Mammary epithelial cell (primary cell): ENCODE measurements at regions of chr1 and their contacts with region 1.

Region 1: GRCh38 chr1:203216274-203217138 is 13.0 kb downstream of the CHIT1 start:
- DNase-seq: peak; percentile 24
- H3K4me3 ChIP-seq: no peak overlapping the region
- H3K27ac ChIP-seq: no peak overlapping the region
- H3K4me1 ChIP-seq: no peaks in the 10 kb centered on the region
- H3K27me3 ChIP-seq: no peaks in the 10 kb centered on the region
- CTCF ChIP-seq: peak; percentile 64 to 66

Region 2: GRCh38 chr1:203026031-203026989 is 190.2 kb before region 1 on chr1 and contains the start of gene PPFIA4:
- CTCF ChIA-PET with region 1: interaction called, 3 read pairs
- dilution Hi-C with region 1: loop called (anchors 10 kb)
- in situ Hi-C with region 1: loop called (anchors 10 to 25 kb)
- intact Hi-C with region 1: no loop called
- DNase-seq: peak; percentile 83
- H3K4me3 ChIP-seq: peak within 1 kb of the TSS; percentile 56 to 95 (median 89)
- H3K27ac ChIP-seq: peak within 1 kb of the TSS; percentile 12
- H3K4me1 ChIP-seq: peaks cover 8% of the 10 kb centered on the region
- H3K27me3 ChIP-seq: no peaks in the 10 kb centered on the region
- CTCF ChIP-seq: no peak
- total RNA-seq, gene PPFIA4: 8.2 to 8.3 TPM

Region 3: DNA sequence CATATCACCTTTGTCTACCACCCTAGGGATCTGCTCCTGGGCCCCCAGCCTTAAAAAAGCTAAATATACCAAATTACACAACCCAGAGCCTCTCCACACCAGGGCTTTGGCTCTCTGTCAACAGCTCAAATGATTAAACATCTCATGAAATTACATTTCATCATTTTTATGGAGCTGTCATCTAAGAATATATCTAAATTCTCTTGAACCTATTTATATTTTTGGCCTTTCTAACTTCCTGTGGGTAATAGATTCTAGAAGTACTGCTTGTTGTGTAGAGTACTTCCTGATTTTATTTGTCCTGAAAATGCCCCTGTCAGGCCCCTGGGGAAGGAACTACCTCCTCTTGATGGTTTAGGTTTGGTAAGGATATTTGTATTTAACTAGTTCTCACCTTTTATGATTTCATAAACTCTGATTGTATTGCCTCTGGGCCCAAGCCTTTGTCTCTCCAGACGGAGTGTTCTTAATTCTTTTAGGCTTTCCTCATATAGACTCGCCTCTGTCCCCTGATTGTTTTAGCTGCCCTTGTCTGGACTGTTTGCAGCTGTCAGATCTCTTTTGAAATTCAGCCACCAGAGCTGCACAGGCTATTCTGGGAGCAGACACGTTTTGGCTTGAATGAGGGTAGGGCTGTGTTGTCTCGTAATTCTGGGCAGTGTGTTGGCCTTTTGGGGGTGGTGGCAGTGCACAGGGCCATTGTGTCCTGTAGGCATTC is 147.3 kb before region 1 on chr1:
- CTCF ChIA-PET with region 1: no interaction called
- dilution Hi-C with region 1: no loop called
- in situ Hi-C with region 1: no loop called
- intact Hi-C with region 1: no loop called
- DNase-seq: peak; percentile 11
- H3K4me3 ChIP-seq: no peak overlapping the region
- H3K27ac ChIP-seq: no peak overlapping the region
- H3K4me1 ChIP-seq: no peaks in the 10 kb centered on the region
- H3K27me3 ChIP-seq: no peaks in the 10 kb centered on the region
- CTCF ChIP-seq: no peak

Region 4: GRCh38 chr1:203101915-203102634 is 114.4 kb before region 1 on chr1:
- CTCF ChIA-PET with region 1: no interaction called
- dilution Hi-C with region 1: no loop called
- in situ Hi-C with region 1: no loop called
- intact Hi-C with region 1: no loop called
- DNase-seq: no peak
- H3K4me3 ChIP-seq: no peak overlapping the region
- H3K27ac ChIP-seq: no peak overlapping the region
- H3K4me1 ChIP-seq: no peaks in the 10 kb centered on the region
- H3K27me3 ChIP-seq: no peaks in the 10 kb centered on the region
- CTCF ChIP-seq: no peak

Region 5: DNA sequence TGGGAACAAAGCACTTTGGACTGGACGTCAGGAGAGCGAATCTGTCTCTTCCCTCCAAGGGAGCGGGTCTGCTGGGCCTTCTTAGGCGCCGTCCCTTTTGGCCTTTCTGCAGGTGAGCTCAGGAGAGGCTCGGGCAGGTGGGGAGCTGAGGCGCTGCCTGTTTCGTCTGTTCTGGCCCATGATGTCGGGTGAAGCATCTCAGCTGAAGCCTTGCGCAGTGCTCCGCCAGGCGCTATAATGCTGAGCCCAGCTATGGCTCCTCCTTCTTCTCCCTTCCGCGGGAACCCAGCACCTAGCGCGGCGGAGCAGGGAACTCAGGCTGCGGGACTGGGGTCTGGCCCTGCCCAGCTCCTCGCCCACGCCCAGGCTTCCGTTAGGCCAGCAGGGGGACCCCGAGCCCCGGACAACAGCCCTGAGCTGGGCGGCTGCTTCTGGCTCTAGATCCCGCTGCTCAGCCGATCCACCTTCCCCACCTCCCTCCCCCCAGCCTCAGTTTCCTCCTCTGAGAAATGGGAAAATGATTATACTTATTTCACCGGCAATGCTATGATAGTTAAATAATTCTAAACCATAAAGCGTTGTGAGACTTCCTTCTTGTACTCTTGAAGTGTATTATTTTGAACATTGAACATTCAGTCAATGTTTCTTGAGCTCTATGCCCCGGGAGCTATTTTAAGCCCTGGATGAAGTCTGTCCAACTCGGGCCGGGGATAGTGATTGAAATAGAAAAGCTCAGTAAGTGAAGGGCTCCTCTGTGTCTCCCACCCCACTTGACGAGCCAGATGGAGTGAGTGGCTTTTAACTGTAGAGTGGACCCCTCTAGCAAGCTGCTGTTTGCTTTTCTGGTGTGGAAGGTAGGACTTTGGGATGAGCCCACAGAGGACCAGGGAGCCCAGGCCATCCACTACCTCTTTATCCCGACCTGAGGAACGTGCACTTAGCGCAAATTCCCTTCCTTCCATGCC is 98.6 kb before region 1 on chr1:
- CTCF ChIA-PET with region 1: interaction called, 19 read pairs
- dilution Hi-C with region 1: loop called (anchors 5 kb)
- in situ Hi-C with region 1: no loop called
- intact Hi-C with region 1: loop called (anchors 1 kb)
- DNase-seq: peak; percentile 43
- H3K4me3 ChIP-seq: no peak overlapping the region
- H3K27ac ChIP-seq: no peak overlapping the region
- H3K4me1 ChIP-seq: no peaks in the 10 kb centered on the region
- H3K27me3 ChIP-seq: peaks cover 13% of the 10 kb centered on the region
- CTCF ChIP-seq: peak; percentile 58 to 83

Region 6: DNA sequence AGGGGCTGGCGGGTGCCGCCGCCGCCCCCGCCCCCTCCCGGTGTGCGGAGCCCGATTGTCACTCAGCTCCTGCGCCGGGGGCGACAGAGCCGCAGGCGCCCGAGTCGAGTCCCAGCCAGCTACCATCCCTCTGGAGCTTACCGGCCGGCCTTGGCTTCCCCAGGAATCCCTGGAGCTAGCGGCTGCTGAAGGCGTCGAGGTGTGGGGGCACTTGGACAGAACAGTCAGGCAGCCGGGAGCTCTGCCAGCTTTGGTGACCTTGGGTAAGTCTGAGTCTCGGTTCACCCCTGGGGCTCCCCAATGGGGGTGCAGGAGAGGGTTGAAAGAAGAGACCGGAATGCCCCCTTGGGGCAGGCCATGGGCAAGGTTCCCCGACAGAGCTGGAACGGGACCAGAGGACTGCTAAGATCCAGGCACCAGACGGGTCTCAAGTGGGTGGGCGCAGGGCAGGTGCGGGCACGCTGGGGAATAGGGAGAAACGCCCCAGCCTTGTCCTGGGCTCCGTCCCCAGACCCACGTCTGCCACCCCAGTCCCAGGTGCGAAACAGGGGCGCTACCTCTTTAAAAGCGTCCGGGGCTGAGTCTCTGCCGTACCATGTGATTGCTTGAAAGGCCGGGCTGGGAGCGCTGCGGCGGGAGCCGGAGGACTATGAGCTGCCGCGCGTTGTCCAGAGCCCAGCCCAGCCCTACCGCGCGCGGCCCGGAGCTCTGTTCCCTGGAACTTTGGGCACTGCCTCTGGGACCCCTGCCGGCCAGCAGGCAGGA is 88.7 kb before region 1 on chr1 and contains the start of gene ADORA1:
- CTCF ChIA-PET with region 1: no interaction called
- dilution Hi-C with region 1: loop called (anchors 5 kb)
- in situ Hi-C with region 1: no loop called
- intact Hi-C with region 1: no loop called
- DNase-seq: peak; percentile 47
- H3K4me3 ChIP-seq: peak within 1 kb of the TSS; percentile 32 to 58 (median 41)
- H3K27ac ChIP-seq: no peak within 1 kb of the TSS
- H3K4me1 ChIP-seq: peaks cover 13% of the 10 kb centered on the region
- H3K27me3 ChIP-seq: no peaks in the 10 kb centered on the region
- CTCF ChIP-seq: peak in 1 of 2 donors; percentile 11
- total RNA-seq, gene ADORA1: 0.96 to 1.7 TPM

Region 7: GRCh38 chr1:203166566-203166940 is 50.0 kb before region 1 on chr1:
- CTCF ChIA-PET with region 1: no interaction called
- dilution Hi-C with region 1: no loop called
- in situ Hi-C with region 1: no loop called
- intact Hi-C with region 1: loop called (anchors 1 kb)
- DNase-seq: no peak
- H3K4me3 ChIP-seq: no peak overlapping the region
- H3K27ac ChIP-seq: no peak overlapping the region
- H3K4me1 ChIP-seq: no peaks in the 10 kb centered on the region
- H3K27me3 ChIP-seq: peaks cover 3% of the 10 kb centered on the region
- CTCF ChIP-seq: no peak

Region 8: GRCh38 chr1:203172128-203173010 is 44.1 kb before region 1 on chr1:
- CTCF ChIA-PET with region 1: no interaction called
- dilution Hi-C with region 1: no loop called
- in situ Hi-C with region 1: no loop called
- intact Hi-C with region 1: loop called (anchors 2 kb)
- DNase-seq: peak; percentile 40
- H3K4me3 ChIP-seq: no peak overlapping the region
- H3K27ac ChIP-seq: no peak overlapping the region
- H3K4me1 ChIP-seq: peaks cover 5% of the 10 kb centered on the region
- H3K27me3 ChIP-seq: no peaks in the 10 kb centered on the region
- CTCF ChIP-seq: peak; percentile 97 to 98

Region 9: GRCh38 chr1:203229471-203230135 is 13.1 kb after region 1 on chr1 and contains the start of gene CHIT1:
- CTCF ChIA-PET with region 1: no interaction called
- dilution Hi-C with region 1: no loop called
- in situ Hi-C with region 1: no loop called
- intact Hi-C with region 1: no loop called
- DNase-seq: no peak
- H3K4me3 ChIP-seq: no peak within 1 kb of the TSS
- H3K27ac ChIP-seq: no peak within 1 kb of the TSS
- H3K4me1 ChIP-seq: no peaks in the 10 kb centered on the region
- H3K27me3 ChIP-seq: no peaks in the 10 kb centered on the region
- CTCF ChIP-seq: no peak
- total RNA-seq, gene CHIT1: under 0.01 TPM in 1 of 2 donors, not detected in the other

Region 10: DNA sequence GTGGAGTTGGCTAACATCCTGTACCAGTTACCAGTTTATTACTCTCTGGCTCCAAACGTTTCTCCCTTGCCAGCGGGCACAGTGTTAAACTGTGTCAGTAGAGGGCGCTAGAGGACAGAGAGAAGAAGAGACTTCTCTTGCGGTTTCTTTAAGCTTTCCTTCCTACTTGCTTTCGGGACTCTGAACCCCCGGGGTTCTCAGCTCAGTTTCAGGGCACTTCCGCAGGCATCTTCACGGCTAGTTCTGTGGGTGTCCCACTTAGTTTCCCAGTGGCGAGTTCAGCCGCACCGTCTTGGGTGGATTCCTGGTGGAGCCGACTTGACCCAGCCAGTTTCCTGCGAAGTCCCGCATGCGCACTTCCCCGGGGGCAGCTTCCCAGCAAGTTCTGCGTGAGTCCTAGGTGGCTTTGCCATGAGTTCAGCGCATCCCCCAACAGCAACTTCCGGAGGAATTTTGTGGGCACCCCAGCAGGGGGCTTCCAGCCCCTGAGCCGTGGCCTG is 50.9 kb after region 1 on chr1:
- CTCF ChIA-PET with region 1: no interaction called
- dilution Hi-C with region 1: no loop called
- in situ Hi-C with region 1: no loop called
- intact Hi-C with region 1: loop called (anchors 2 kb)
- DNase-seq: peak; percentile 78
- H3K4me3 ChIP-seq: peak overlapping the region; percentile 12 to 52 (median 52)
- H3K27ac ChIP-seq: peak overlapping the region; percentile 1
- H3K4me1 ChIP-seq: peaks cover 2% of the 10 kb centered on the region
- H3K27me3 ChIP-seq: no peaks in the 10 kb centered on the region
- CTCF ChIP-seq: peak; percentile 92 to 94